Posterior vena cava (tissue), 2 donors: ENCODE measurements at regions of chr5 and their contacts with region 1.

Region 1: GRCh38 chr5:150436141-150436680 is 13.3 kb downstream of the RPS14 start:
- DNase-seq: peak; percentile 95

Region 2: DNA sequence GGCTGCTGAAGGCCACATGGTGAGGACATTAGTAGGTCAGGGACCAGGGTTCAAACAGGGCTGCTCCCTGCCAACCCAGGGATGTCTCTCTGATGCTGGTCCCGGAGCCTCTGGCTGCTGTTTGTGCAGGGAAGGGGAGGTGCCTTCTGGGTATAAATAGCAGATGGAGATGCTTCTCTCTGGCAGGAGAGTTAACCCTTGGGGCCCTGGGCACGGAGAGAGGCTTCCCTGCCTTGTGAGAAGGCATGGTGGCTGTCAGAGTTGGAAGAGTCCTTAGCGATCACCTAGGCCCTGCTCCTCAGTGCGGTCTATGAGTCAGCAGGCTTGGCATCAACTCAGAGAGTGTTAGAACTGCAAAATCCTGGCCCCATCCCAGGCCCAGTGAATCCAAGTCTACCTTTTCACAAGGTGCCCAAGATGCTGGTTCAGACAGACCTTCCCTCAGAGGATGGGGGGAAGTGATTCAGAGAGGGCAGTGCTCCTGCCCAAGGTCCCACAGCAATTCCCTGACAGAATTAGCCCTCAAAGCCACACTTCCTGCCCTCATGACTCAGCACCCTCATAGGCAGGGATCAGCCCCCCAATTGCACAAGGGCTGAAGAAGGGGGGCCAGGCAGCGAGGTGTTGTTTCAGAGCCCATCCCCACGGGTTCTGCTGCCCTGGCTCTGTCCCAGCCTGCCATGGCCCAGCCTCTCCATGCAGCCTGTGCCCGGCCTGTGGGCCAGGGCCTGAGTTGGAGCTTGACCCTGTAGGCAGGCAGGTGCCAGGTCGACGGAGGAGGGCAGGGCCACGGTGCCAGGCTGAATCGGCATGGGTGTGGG is 172.2 kb before region 1 on chr5:
- intact Hi-C with region 1: loop called in 1 of 2 experiments (anchors 10 kb)
- DNase-seq: no peak

Region 3: GRCh38 chr5:150398722-150399523 is 37.3 kb before region 1 on chr5:
- intact Hi-C with region 1: no loop called
- DNase-seq: no peak